Activated T-helper 2 cell treated with anti-CD3 and anti-CD28 coated beads, Interferon-gamma antibody, Interleukin-2, Interleukin-4, amounts not matched to agents 10 μg/mL and 5 μg/mL and 100 μg/mL, durations not matched to agents 14 hours and 24 hours and 36 hours (primary cell): ENCODE measurements at regions of chr3 and their contacts with region 1.

Region 1: GRCh38 chr3:160754855-160755747 is 930 bp upstream of the PPM1L start:
- DNase-seq: peak; percentile 85
- H3K4me3 Mint-ChIP-seq: peak overlapping the region; percentile 91
- H3K27ac Mint-ChIP-seq: peak overlapping the region; percentile 91
- H3K4me1 Mint-ChIP-seq: peaks cover 20% of the 10 kb centered on the region
- H3K27me3 Mint-ChIP-seq: peaks cover 43% of the 10 kb centered on the region

Region 2: DNA sequence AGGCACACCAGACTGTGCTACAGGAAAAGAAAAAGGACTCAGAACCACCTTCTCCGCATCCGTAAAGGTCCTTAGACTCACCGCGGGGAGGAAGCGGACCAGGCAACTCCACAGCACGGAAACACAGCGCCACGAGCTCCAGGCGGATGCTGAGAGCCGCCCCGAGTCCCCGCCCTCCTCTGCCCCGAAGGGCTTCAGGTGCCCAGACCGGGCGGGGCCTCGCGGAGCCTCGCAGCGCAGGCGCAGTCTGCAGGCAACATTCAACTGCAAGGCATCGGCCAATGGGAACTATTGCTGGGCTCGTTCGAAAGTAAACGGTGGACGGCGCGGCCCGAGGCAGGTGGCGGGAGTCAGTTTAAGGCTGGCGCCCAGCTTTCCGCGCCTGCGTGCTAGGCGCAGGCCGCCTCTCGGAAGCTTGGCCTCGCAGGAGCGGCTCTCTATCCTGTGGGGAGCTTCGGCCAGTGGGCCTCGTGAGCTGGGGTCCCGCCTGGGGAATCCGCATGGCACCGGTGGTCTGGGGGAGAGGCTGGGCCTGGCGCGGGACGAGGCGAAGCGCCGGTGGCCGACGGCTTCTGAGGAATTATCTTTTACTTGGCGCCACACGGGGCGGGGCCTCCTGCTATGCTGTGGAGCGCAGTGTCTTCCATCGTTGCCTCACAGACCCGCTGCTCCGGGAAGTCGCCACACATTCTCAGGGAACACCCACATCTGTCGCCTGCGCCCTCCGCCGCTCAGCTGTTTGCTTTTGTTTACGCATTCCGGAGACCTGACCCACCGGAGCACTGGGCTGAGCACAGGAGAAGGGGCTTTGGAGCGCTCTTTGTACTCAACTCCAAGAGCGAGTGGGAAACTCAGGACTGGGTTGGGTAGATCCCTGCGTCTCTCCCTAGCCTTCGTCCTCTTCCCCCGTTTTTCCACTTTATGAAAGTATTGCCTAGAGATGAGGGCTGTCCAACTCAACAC is 305.2 kb before region 1 on chr3 and contains the start of gene TRIM59:
- intact Hi-C with region 1: loop called (anchors 5 kb)
- DNase-seq: peak; percentile 97
- H3K4me3 Mint-ChIP-seq: peak within 1 kb of the TSS; percentile 91
- H3K27ac Mint-ChIP-seq: peak within 1 kb of the TSS; percentile 95
- H3K4me1 Mint-ChIP-seq: peaks cover 33% of the 10 kb centered on the region
- H3K27me3 Mint-ChIP-seq: peaks cover 2% of the 10 kb centered on the region
- total RNA-seq, gene TRIM59: 35.9 and 37.0 TPM in 2 replicates

Region 3: DNA sequence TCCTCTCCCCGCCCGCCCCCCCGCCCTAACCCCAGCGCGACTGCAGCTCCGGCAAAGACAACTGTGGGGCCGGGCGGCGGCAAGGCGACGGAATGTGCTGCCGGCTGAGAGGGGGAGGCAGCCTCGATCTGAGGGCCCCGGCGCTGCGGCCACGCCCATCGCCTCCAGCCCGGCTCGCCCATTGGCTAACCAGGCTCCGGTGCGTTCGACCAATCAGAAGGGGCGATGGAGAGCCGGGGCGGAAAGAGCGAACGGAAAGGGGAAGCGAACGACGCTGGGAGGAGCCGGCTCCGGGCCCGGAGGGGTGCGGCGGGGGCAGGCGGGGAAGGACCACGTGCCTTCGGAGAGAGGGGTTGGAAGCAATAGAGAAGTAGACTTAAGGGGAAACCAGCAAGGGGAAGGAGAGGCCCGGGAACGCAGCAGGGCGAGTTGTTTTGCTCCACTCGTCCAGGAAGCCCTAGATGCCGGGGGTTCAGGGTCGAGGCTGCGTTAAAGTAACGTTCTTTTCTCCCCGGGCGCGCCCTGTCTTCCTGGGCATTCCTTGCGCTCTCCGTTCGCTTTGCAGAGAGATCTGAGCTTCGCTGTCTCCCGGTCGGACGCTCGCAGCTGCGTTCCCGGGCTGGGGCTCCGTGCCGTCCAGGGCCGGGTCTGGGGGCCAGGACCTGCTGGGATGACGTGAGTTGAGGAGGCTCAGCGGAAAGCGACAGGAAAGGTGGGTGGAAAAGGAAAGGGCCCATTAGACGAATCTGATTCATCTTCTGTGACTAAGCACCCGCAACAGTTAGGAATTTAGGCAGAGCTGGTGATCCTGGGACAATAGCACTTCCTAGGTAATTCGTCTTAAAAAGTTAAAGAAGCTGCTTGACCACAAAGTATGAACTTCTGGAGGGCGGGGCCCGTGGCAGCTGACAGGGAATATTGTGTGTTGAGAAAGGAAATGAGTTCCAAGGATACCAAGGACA is 189.4 kb before region 1 on chr3 and contains the start of gene KPNA4:
- intact Hi-C with region 1: loop called (anchors 1 kb)
- DNase-seq: peak; percentile 96
- H3K4me3 Mint-ChIP-seq: peak within 1 kb of the TSS; percentile 99
- H3K27ac Mint-ChIP-seq: peak within 1 kb of the TSS; percentile 96
- H3K4me1 Mint-ChIP-seq: peaks cover 61% of the 10 kb centered on the region
- H3K27me3 Mint-ChIP-seq: no peaks in the 10 kb centered on the region
- total RNA-seq, gene KPNA4: 69.8 and 71.2 TPM in 2 replicates

Region 4: GRCh38 chr3:160801386-160802118 is 46.5 kb after region 1 on chr3:
- intact Hi-C with region 1: loop called (anchors 1 kb)
- DNase-seq: peak; percentile 72
- H3K4me3 Mint-ChIP-seq: peak overlapping the region; percentile 37
- H3K27ac Mint-ChIP-seq: peak overlapping the region; percentile 70
- H3K4me1 Mint-ChIP-seq: peaks cover 20% of the 10 kb centered on the region
- H3K27me3 Mint-ChIP-seq: peaks cover 15% of the 10 kb centered on the region

Region 5: GRCh38 chr3:160941885-160942494 is 186.9 kb after region 1 on chr3:
- intact Hi-C with region 1: loop called (anchors 5 kb)
- DNase-seq: peak; percentile 32
- H3K4me3 Mint-ChIP-seq: no peak overlapping the region
- H3K27ac Mint-ChIP-seq: no peak overlapping the region
- H3K4me1 Mint-ChIP-seq: peaks cover 3% of the 10 kb centered on the region
- H3K27me3 Mint-ChIP-seq: peaks cover 7% of the 10 kb centered on the region

Region 6: DNA sequence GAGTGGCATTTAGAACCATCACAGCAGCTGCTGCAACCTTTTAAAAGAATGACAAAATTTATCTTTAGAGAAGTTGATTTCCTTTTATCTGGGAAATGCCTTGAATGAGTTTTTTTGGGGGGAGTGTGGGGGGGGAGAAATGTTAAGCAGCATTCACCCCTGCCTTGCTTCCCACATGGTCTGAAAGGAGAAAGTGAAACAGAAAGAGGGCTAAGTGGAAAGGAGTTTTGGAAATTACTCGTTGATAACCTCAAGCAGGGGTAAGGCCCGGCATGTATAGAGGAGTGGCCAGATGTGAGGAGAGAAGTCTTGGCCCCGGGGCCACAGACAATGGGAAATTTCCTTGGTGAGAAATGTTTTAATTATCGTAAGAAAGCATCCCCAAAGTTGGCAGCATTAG is 326.5 kb after region 1 on chr3:
- intact Hi-C with region 1: loop called (anchors 5 kb)
- DNase-seq: no peak
- H3K4me3 Mint-ChIP-seq: no peak overlapping the region
- H3K27ac Mint-ChIP-seq: no peak overlapping the region
- H3K4me1 Mint-ChIP-seq: peaks cover 24% of the 10 kb centered on the region
- H3K27me3 Mint-ChIP-seq: peaks cover 26% of the 10 kb centered on the region

Region 7: DNA sequence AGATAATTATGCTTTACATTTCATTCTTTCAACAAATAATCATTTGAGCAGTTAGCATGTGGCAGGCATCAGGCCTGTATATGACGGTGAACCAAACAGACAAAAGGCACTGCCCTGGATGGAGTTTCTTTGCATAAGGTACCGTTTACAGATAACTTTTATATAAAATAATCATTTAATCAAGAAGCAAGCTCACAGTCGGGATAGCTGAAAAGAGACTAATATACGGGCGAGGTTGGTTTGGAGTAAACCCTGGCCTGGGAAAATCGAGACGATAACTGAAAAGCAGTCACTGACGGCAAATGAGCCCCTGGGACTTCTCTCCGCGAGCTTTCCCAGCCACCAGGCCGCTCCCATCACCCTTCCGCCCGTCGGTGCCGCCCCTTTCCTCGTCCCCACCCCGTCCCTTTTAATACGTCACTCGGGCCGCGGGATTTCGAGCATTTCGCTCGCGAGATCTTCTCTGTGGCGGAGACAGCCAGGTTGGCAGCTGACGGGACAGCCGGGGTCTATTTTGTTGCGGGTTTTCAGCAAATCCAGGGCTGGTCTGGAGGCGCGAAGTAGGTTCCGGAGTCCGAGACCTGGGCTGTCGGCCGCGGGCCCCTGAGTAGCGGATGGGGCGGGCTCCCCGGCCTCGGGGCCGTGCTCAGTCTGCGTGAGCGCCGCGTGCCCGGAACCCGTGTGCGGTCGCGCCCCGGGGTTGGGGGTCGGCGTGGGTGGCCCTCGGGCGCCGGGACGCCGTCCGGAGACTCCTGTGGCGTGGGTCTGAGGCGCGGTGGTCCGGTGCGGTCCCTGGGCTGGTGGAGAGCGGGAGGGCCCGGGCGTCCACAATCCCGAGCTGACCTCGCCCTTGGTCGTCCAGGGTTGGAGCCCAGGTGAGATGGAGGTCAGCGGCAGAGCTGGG is 466.0 kb after region 1 on chr3 and contains the start of gene NMD3:
- intact Hi-C with region 1: loop called (anchors 5 kb)
- DNase-seq: peak; percentile 88
- H3K4me3 Mint-ChIP-seq: peak within 1 kb of the TSS; percentile 94
- H3K27ac Mint-ChIP-seq: peak within 1 kb of the TSS; percentile 85
- H3K4me1 Mint-ChIP-seq: peaks cover 23% of the 10 kb centered on the region
- H3K27me3 Mint-ChIP-seq: peaks cover 7% of the 10 kb centered on the region
- total RNA-seq, gene NMD3: 70.1 and 70.4 TPM in 2 replicates